ENCODE measurements at regions of chr12 and their contacts with region 1.

Region 1: DNA sequence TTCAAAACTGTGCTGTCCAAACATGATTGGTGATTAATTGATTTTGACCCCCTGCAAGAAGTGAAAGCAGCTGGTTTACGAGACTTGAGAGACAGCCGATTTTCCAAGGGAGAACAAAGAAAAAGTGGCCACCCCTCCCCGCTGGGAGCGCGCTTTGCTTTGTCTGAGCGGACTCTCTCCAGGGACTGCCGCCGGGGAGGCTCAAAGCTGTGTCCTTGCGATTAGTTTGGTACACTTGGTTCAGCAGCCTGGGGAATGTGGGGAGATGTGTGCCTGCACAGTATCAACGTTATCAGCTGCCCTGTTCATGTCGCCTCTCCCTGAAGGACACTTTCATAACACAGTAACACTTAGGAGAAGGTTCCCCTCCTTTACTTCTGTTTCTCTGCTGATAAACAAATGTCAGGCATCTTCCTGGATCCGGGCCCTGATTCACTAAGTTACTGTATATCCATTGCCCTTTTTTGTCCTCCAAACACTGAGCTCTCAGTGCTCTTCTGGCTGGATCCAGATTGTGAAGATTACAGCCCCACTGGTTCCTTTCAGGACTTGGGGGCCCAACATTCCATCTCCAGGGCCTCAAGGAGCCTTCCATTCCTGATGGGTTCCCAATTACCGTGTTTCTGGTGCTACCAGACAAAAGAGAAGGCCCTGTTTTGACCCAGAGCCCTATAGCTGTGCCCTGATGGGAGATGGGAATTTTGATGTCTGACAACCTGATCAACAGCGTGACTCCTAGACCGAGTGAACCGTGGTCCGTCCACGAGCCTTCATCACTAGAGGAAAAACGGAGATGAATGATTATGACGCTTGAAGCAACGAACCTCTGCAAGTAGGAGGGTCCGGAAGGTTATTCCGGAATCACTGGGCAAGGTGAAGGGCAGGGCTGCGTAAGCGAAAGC is 31.7 kb upstream of the TUBA1C start:
- DNase-seq: peak in 1 of 2 donors; percentile 17
- ATAC-seq: no peak
- H3K4me3 ChIP-seq: peak overlapping the region in 2 of 4 donors; percentile 2 to 22
- H3K27ac ChIP-seq: peak overlapping the region; percentile 35 to 44 (median 38)
- H3K4me1 ChIP-seq: peaks cover 11 to 13% of the 10 kb centered on the region in 2 donors
- H3K27me3 ChIP-seq: no peaks in the 10 kb centered on the region
- CTCF ChIP-seq: no peak
- POLR2A ChIP-seq: no peak

Region 2: GRCh38 chr12:49060237-49061156 is 172.7 kb before region 1 on chr12 and contains the start of gene KMT2D:
- in situ Hi-C with region 1: loop called in 1 of 4 experiments (anchors 10 kb)
- intact Hi-C with region 1: loop called (anchors 2 kb)
- DNase-seq: peak; percentile 83 to 89
- ATAC-seq: peak; percentile 79
- H3K4me3 ChIP-seq: peak within 1 kb of the TSS; percentile 83 to 100 (median 94)
- H3K27ac ChIP-seq: peak within 1 kb of the TSS; percentile 97 to 100 (median 99)
- H3K4me1 ChIP-seq: peaks cover 41 to 45% of the 10 kb centered on the region in 2 donors
- H3K27me3 ChIP-seq: no peaks in the 10 kb centered on the region
- CTCF ChIP-seq: peak; percentile 36 to 83 (median 63)
- POLR2A ChIP-seq: peak; percentile 69 to 76
- total RNA-seq, gene KMT2D: 36.0 to 99.0 (median 71.3) TPM

Region 3: DNA sequence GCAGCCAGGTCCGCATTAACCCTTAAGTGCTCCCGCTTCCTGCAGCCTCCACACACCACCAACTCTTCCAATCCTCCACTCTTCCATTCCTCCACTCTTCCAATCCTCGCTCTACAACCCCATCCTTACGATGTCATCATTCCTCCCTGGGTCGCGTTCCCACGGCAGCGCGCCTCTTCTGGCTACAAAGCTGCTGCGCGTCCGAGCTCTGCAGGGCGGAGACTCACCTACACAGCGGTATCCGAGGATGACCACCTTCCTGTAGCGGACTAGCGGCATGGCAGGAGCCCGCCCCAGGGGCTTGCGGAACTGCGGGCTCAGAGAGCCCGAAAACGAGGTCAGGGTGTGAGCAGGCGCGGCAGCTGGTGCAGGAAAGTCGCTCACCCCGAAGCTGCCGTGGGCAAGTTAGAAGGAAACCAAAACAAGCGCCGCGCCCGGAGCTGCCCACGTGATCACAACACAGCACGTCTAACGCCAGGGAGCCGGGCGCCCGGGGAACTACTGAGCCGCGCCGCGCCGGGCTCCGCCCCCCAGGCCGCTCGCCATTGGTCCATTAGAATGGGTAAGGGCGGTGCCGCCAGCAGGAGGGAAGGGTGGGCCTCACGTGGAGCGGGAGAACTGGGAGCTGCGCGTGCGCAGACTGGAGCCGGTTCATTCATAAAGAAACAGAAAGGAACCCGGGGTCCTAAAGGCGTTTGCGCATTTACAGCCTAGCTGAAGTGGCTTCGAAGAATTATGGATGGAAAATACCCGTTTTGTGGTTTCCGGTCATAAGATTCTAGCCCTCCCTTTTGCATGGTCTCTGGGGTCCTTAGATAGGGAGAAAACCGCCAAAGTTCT is 163.5 kb before region 1 on chr12 and contains the start of gene RHEBL1:
- in situ Hi-C with region 1: loop called in 1 of 4 experiments (anchors 10 kb)
- intact Hi-C with region 1: no loop called
- DNase-seq: peak; percentile 97 to 98
- ATAC-seq: peak; percentile 98 to 99
- H3K4me3 ChIP-seq: peak within 1 kb of the TSS; percentile 77 to 94 (median 86)
- H3K27ac ChIP-seq: peak within 1 kb of the TSS; percentile 80 to 84 (median 82)
- H3K4me1 ChIP-seq: peaks cover 9 to 11% of the 10 kb centered on the region in 2 donors
- H3K27me3 ChIP-seq: no peaks in the 10 kb centered on the region
- CTCF ChIP-seq: peak in 1 of 5 experiments; percentile 9
- POLR2A ChIP-seq: peak; percentile 17 to 26
- total RNA-seq, gene RHEBL1: 0.46 to 0.71 TPM in 2 of 4 donors, not detected in the others

Region 4: GRCh38 chr12:49088190-49088931 is 144.8 kb before region 1 on chr12:
- in situ Hi-C with region 1: loop called in 2 of 4 experiments (anchors 10 to 25 kb)
- intact Hi-C with region 1: loop called (anchors 1 kb)
- DNase-seq: peak; percentile 51 to 77
- ATAC-seq: peak; percentile 94 to 97
- H3K4me3 ChIP-seq: peak overlapping the region in 2 of 4 donors; percentile 20 to 40
- H3K27ac ChIP-seq: no peak overlapping the region
- H3K4me1 ChIP-seq: peaks cover 8 to 22% of the 10 kb centered on the region in 2 donors
- H3K27me3 ChIP-seq: peaks cover 42 to 45% (median 45%) of the 10 kb centered on the region in 3 donors
- CTCF ChIP-seq: peak; percentile 72 to 92 (median 87)
- POLR2A ChIP-seq: no peak

Region 5: GRCh38 chr12:49188914-49189367 is 44.2 kb before region 1 on chr12 and contains the start of gene TUBA1A:
- in situ Hi-C with region 1: no loop called
- intact Hi-C with region 1: loop called (anchors 2 kb)
- DNase-seq: peak; percentile 77 to 78
- ATAC-seq: peak; percentile 79 to 90
- H3K4me3 ChIP-seq: peak within 1 kb of the TSS; percentile 67 to 93 (median 78)
- H3K27ac ChIP-seq: peak within 1 kb of the TSS; percentile 80 to 86 (median 84)
- H3K4me1 ChIP-seq: peaks cover 8 to 14% of the 10 kb centered on the region in 2 donors
- H3K27me3 ChIP-seq: peaks cover 7 to 8% (median 7%) of the 10 kb centered on the region in 3 donors
- CTCF ChIP-seq: no peak
- POLR2A ChIP-seq: peak; percentile 51 to 82
- total RNA-seq, gene TUBA1A: 14.7 to 68.0 (median 25.1) TPM